Mammary epithelial cell (primary cell): ENCODE measurements at regions of chr1 and their contacts with region 1.

Region 1: DNA sequence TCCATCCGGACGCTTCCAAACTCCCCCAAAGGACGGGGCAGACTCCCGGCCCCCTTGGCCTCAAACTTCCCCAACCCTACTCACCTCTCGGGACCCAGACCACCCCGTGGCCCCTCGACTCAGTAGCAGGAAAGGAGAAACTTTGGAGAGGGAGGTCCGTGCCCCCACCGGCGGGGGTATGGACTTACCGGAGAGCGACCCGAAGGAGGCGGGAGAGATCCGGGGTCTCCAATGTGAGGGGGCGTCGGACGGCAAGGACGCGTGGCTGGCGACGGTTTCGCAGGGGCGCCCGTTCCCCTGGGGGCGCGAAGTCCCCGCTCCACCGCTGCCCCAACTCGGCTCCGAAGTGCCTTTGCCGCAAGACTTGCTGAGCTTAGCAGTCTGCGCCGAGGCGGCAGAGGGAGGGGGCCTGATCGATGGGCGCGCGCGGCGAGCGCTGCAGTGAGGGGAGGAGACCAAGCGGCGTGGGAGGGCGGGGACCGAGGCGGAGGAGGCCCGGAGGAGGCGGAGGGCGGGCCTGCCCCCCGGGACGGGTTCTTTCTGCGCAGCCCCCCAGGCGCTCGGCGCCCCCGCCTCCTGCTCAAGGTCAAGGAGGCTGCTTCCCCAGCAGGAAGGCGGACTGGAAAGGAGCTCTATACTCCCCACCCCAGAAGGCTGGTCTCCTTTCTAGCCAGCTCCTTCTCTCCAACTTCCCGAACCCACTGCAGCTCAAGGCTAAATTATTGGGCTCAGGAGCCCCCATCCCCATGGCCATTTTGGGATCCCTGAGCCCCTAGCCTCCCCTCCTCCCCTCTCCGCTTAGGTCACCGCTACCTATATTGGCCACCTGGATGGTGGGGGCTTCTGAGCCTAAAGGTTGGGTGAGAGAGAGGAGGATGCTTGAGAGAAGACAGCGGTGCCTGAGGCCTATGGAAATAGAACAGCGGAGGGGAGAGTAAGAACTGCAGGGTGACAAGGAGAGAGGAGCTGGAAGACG is at the start of gene SYT2:
- DNase-seq: no peak
- H3K4me3 ChIP-seq: no peak within 1 kb of the TSS
- H3K27ac ChIP-seq: no peak within 1 kb of the TSS
- H3K4me1 ChIP-seq: peaks cover 5% of the 10 kb centered on the region
- H3K27me3 ChIP-seq: peaks cover 29% of the 10 kb centered on the region
- CTCF ChIP-seq: no peak
- total RNA-seq, gene SYT2: 0.07 TPM in 1 of 2 donors, not detected in the other

Region 2: GRCh38 chr1:202184750-202185460 is 525.5 kb before region 1 on chr1:
- CTCF ChIA-PET with region 1: no interaction called
- dilution Hi-C with region 1: no loop called
- in situ Hi-C with region 1: loop called (anchors 10 to 25 kb)
- intact Hi-C with region 1: no loop called
- DNase-seq: peak; percentile 74
- H3K4me3 ChIP-seq: no peak overlapping the region
- H3K27ac ChIP-seq: no peak overlapping the region
- H3K4me1 ChIP-seq: peaks cover 5% of the 10 kb centered on the region
- H3K27me3 ChIP-seq: no peaks in the 10 kb centered on the region
- CTCF ChIP-seq: peak; percentile 86 to 93

Region 3: GRCh38 chr1:202192770-202193613 is 517.4 kb before region 1 on chr1:
- CTCF ChIA-PET with region 1: no interaction called
- dilution Hi-C with region 1: no loop called
- in situ Hi-C with region 1: loop called (anchors 10 to 25 kb)
- intact Hi-C with region 1: no loop called
- DNase-seq: no peak
- H3K4me3 ChIP-seq: no peak overlapping the region
- H3K27ac ChIP-seq: no peak overlapping the region
- H3K4me1 ChIP-seq: no peaks in the 10 kb centered on the region
- H3K27me3 ChIP-seq: peaks cover 17% of the 10 kb centered on the region
- CTCF ChIP-seq: peak; percentile 73 to 89

Region 4: DNA sequence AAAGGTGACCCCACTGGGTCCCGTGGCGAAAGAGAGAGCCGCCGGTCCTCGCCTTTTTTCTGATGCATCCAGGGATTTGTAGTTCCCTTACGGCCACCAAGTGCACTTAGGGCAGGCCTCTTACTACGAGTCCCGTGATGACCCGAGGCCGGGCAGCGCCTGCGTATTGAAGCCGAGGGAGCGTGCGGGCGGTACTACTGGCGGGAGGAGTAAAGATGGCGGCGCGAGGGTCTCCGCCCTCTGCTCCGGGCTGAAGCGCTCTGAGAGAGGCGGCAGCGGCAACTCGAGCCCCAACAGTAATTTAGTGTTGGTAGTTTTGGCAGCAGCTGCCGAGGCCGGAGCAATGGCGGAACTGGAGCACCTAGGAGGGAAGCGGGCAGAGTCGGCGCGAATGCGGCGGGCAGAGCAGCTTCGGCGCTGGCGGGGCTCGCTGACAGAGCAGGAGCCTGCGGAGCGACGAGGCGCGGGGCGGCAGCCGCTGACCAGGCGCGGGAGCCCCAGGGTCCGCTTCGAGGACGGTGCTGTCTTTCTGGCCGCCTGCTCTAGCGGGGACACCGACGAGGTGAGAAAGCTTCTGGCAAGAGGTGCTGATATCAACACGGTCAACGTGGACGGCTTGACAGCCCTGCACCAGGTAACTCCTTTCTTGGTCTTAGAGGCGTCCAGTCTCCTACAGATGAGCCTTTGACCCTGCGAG is 361.7 kb before region 1 on chr1 and contains the start of gene PPP1R12B:
- CTCF ChIA-PET with region 1: no interaction called
- dilution Hi-C with region 1: no loop called
- in situ Hi-C with region 1: loop called in 1 of 2 experiments (anchors 25 kb)
- intact Hi-C with region 1: no loop called
- DNase-seq: peak; percentile 98
- H3K4me3 ChIP-seq: peak within 1 kb of the TSS; percentile 95 to 97 (median 97)
- H3K27ac ChIP-seq: peak within 1 kb of the TSS; percentile 84
- H3K4me1 ChIP-seq: peaks cover 8% of the 10 kb centered on the region
- H3K27me3 ChIP-seq: no peaks in the 10 kb centered on the region
- CTCF ChIP-seq: no peak
- total RNA-seq, gene PPP1R12B: 13.5 to 42.0 TPM

Region 5: GRCh38 chr1:202462342-202463076 is 247.8 kb before region 1 on chr1:
- CTCF ChIA-PET with region 1: no interaction called
- dilution Hi-C with region 1: no loop called
- in situ Hi-C with region 1: loop called in 1 of 2 experiments (anchors 10 kb)
- intact Hi-C with region 1: no loop called
- DNase-seq: no peak
- H3K4me3 ChIP-seq: no peak overlapping the region
- H3K27ac ChIP-seq: no peak overlapping the region
- H3K4me1 ChIP-seq: peaks cover 7% of the 10 kb centered on the region
- H3K27me3 ChIP-seq: no peaks in the 10 kb centered on the region
- CTCF ChIP-seq: no peak

Region 6: DNA sequence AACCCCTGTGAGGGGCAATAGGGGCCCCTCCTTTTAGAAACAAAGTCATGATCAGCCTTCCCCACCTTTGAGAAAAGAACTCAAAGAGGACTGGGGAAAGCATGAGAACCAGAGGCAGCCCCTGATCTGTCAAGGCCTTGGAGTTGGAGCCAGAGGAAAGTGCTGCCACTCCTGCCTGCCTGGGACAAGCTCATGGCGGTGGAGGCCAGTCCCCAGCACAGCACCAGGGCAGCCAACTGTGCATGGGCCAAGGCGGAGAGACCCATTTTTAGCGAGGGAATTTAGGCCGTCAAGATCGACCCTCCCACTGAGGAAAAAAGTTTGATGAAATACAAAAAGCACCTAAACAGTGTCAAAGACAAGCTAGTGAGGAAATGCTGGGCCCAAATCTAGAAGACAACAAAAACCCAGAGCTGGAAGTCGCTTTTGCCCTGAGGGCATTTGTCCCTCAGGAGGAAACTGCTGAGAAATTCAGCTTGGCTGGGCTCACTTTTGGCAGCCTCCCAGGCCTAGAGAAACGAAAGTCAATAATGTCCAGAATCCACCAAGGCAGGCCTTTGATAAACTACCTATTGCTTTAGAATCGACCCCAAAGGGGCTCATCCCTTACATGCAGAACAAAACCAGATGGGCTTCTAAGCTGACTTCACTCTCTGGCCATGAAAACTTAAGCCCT is 39.1 kb before region 1 on chr1:
- CTCF ChIA-PET with region 1: no interaction called
- dilution Hi-C with region 1: no loop called
- in situ Hi-C with region 1: no loop called
- intact Hi-C with region 1: no loop called
- DNase-seq: no peak
- H3K4me3 ChIP-seq: no peak overlapping the region
- H3K27ac ChIP-seq: no peak overlapping the region
- H3K4me1 ChIP-seq: no peaks in the 10 kb centered on the region
- H3K27me3 ChIP-seq: no peaks in the 10 kb centered on the region
- CTCF ChIP-seq: no peak

Region 7: GRCh38 chr1:203448521-203449061 is 738.2 kb after region 1 on chr1:
- CTCF ChIA-PET with region 1: no interaction called
- dilution Hi-C with region 1: no loop called
- in situ Hi-C with region 1: no loop called
- intact Hi-C with region 1: no loop called
- DNase-seq: no peak
- H3K4me3 ChIP-seq: no peak overlapping the region
- H3K27ac ChIP-seq: no peak overlapping the region
- H3K4me1 ChIP-seq: peaks cover 4% of the 10 kb centered on the region
- H3K27me3 ChIP-seq: no peaks in the 10 kb centered on the region
- CTCF ChIP-seq: no peak